CD4-positive, alpha-beta T cell (primary cell): ENCODE measurements at regions of chr19 and their contacts with region 1.

Region 1: DNA sequence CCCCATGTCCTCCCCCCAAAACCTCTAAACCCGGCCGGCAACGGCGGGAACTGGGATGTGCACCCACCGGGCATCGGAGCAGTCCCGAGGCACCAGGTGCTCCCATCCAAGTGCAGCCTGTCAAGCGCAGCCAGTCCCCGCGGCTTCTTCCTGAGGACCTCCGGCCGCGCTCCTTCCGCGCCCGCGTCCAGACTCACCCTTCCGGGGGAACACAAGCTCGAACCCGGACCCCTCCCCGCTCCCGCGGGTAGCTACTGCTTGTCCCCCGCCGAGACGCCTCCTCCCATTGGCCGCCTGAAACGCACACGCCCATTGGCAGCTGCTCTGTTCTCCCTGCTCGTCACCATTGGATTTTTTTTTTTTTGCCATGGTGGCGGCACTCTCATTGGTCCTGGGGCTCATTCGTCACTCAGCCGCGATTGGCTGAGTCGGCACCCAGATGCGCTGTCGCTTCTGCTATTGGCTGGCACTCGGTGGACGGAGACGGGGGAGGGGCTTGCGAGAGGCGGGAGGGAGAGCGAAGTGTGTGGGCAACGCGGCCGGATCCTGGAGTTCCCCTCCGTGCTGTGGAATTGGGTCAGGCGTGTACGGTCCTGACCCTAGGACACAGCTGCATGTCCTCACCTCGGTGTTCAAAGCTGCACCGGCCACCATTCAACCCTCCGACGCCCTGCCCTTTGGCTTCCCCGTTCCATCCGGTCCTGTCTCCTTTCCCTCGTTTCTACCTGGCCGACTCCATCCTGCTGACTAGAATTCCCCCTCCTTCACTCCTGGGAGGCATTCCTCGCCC is at the start of gene TYK2:
- DNase-seq: peak; percentile 88 to 99 (median 95)
- ATAC-seq: peak; percentile 96
- H3K4me3 ChIP-seq: peak within 1 kb of the TSS; percentile 81
- H3K4me3 Mint-ChIP-seq: peak within 1 kb of the TSS; percentile 92
- H3K27ac ChIP-seq: peak within 1 kb of the TSS; percentile 81 to 84
- H3K27ac Mint-ChIP-seq: peak within 1 kb of the TSS; percentile 77
- H3K4me1 ChIP-seq: peaks cover 25% of the 10 kb centered on the region
- H3K4me1 Mint-ChIP-seq: peaks cover 24% of the 10 kb centered on the region
- H3K27me3 ChIP-seq: no peaks in the 10 kb centered on the region
- H3K27me3 Mint-ChIP-seq: no peaks in the 10 kb centered on the region
- CTCF ChIP-seq: no peak
- total RNA-seq, gene TYK2: 229 to 253 TPM

Region 2: DNA sequence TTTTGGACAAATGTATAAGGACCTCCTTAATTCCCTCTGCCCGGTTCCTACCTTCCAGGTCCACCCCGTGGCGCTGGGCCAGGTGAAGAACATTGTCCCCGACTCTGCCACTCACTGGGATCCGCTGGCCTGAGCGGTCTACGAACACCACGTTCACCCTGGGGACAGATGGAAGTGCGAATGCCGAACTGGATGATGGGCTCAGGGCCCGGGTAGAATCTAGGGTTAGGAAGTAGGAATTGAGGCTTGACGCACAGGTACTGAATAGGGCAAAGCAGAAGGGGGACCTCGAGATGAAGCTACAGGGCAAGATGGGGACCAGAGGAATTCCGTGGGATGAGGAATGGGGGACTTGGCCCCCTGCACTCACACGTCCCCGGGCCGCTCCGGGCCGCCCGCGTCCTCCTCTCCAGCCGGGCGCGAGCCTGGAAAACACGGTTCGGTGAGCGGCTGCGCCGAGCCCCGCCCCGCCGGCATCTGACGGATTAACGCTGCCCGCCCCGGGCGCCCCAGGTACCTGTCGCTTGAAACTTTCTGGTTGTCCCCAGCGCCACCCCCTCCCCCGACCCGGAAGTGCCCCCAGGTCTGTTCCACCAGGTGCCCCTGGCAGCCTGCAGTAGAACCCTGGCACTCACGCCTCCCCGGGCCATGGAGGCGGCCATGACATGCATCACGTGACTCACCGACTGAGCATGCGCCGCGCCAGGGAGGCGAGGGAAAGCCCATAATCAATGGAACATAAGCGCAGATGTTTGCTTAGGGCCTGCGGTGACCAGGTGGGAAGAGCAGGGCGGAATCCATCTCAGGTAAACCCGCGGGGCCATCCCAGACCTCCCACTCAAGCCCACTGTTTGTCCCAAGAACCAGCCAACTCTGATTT is 64.9 kb before region 1 on chr19 and contains the start of gene FDX2:
- CTCF ChIA-PET with region 1: no interaction called
- POLR2A ChIA-PET with region 1: interaction called, 3 read pairs
- intact Hi-C with region 1: loop called in 1 of 2 experiments (anchors 5 kb)
- DNase-seq: peak; percentile 84 to 95 (median 88)
- ATAC-seq: peak; percentile 93
- H3K4me3 ChIP-seq: peak within 1 kb of the TSS; percentile 79
- H3K4me3 Mint-ChIP-seq: peak within 1 kb of the TSS; percentile 72
- H3K27ac ChIP-seq: peak within 1 kb of the TSS in 1 of 2 donors; percentile 35
- H3K27ac Mint-ChIP-seq: peak within 1 kb of the TSS; percentile 70
- H3K4me1 ChIP-seq: peaks cover 19% of the 10 kb centered on the region
- H3K4me1 Mint-ChIP-seq: peaks cover 17% of the 10 kb centered on the region
- H3K27me3 ChIP-seq: no peaks in the 10 kb centered on the region
- H3K27me3 Mint-ChIP-seq: no peaks in the 10 kb centered on the region
- CTCF ChIP-seq: no peak
- total RNA-seq, gene FDX2: 1.2 to 1.9 TPM